ENCODE measurements at regions of chr2 and their contacts with region 1.

Region 1: GRCh38 chr2:190408538-190409271 is 550 bp downstream of the MFSD6 start:
- DNase-seq: peak; percentile 61
- H3K4me3 Mint-ChIP-seq: peak overlapping the region; percentile 86
- H3K27ac Mint-ChIP-seq: peak overlapping the region; percentile 91
- H3K4me1 Mint-ChIP-seq: peaks cover 36% of the 10 kb centered on the region
- H3K27me3 Mint-ChIP-seq: no peaks in the 10 kb centered on the region

Region 2: GRCh38 chr2:189613077-189613636 is 795.5 kb before region 1 on chr2:
- intact Hi-C with region 1: no loop called
- DNase-seq: no peak
- H3K4me3 Mint-ChIP-seq: no peak overlapping the region
- H3K27ac Mint-ChIP-seq: no peak overlapping the region
- H3K4me1 Mint-ChIP-seq: peaks cover 3% of the 10 kb centered on the region
- H3K27me3 Mint-ChIP-seq: peaks cover 5% of the 10 kb centered on the region

Region 3: GRCh38 chr2:189783927-189784867 is 624.5 kb before region 1 on chr2 and contains the starts of genes ORMDL1 and PMS1:
- intact Hi-C with region 1: loop called (anchors 10 kb)
- DNase-seq: peak; percentile 94
- H3K4me3 Mint-ChIP-seq: peak within 1 kb of the TSS; percentile 90
- H3K27ac Mint-ChIP-seq: peak within 1 kb of the TSS; percentile 90
- H3K4me1 Mint-ChIP-seq: peaks cover 45% of the 10 kb centered on the region
- H3K27me3 Mint-ChIP-seq: no peaks in the 10 kb centered on the region
- total RNA-seq, gene ORMDL1: 68.8 and 72.1 TPM in 2 replicates
- total RNA-seq, gene PMS1: 57.0 and 58.7 TPM in 2 replicates

Region 4: DNA sequence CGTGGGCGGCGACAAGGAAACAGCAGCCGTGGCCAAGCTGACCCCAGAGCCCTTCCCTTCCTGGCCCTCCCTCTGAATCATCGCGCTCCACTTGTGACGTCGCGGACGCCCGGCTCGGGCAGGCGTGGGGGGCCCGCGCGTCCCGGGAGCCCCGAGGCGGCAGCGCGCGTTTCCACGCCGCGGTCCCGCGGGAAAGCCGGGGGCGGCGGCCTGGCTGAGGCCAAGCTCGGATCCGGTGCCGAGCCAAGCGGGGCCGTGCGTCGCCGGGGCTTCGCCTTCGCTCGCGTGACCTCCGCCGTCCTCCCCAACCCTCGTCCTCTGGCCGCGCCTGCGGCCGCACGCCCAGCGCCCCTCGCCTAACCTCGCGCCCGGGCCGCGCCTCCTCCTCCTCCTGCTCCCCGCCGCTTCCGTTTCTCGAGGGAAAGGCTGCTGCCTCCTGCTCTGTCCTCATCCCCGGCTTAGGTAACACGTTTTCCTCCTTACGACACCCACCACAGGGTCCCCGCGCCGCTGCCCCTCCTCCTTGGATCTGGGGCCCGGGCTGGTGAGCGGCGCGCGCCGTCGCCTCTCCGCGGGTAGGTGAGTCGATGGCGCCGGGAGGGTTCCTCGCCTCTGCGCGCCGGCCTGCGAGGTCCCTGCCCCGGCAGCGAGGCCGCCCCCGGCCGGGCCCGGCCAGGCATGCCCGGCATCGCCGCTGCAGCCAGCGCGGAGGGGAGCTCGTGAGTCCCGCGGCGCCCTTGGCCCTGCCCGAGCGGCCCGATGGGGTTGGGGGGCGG is 65.0 kb before region 1 on chr2 and contains the start of gene INPP1:
- intact Hi-C with region 1: loop called (anchors 2 kb)
- DNase-seq: peak; percentile 30
- H3K4me3 Mint-ChIP-seq: peak within 1 kb of the TSS; percentile 88
- H3K27ac Mint-ChIP-seq: peak within 1 kb of the TSS; percentile 88
- H3K4me1 Mint-ChIP-seq: peaks cover 18% of the 10 kb centered on the region
- H3K27me3 Mint-ChIP-seq: peaks cover 6% of the 10 kb centered on the region
- total RNA-seq, gene INPP1: 12.8 and 13.6 TPM in 2 replicates

Region 5: GRCh38 chr2:190648289-190649034 is 239.8 kb after region 1 on chr2:
- intact Hi-C with region 1: loop called (anchors 2 kb)
- DNase-seq: peak; percentile 74
- H3K4me3 Mint-ChIP-seq: peak overlapping the region; percentile 73
- H3K27ac Mint-ChIP-seq: peak overlapping the region; percentile 74
- H3K4me1 Mint-ChIP-seq: peaks cover 40% of the 10 kb centered on the region
- H3K27me3 Mint-ChIP-seq: no peaks in the 10 kb centered on the region

Region 6: DNA sequence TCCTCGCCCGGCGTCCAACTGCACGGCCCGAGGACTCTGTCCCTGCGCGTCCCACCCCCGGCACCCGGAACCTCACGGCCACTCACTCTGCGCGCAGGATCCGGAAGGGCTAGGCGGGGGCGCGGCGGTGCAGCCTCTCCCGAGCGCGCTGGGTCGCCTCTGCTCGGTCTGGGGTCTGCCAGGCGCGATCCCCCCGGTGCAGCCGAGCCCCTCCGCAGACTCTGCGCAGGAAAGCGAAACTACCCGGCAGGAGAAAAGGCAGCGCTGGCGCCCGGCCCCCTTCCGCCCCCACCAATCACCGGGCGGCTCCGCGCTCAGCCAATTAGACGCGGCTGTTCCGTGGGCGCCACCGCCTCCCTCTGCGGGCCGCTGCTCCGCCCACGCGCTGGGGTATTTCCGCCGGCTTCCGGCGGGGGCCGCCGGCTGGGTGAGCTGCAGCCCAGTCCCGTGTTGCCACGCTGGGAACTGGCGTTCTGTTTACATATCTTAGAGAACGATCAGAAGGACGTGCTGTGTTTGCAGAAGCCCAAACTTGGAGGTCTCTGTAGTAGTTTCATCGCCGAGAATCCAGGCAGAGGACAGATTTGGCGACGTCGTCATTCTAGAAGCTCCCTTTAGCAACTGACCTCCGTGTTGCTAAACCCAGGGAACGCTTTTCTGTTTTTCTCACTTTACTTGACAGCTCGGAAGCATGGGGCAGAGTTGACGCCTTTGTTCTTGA is 605.4 kb after region 1 on chr2 and contains the start of gene STAT1:
- intact Hi-C with region 1: loop called (anchors 1 kb)
- DNase-seq: peak; percentile 96
- H3K4me3 Mint-ChIP-seq: no peak within 1 kb of the TSS
- H3K27ac Mint-ChIP-seq: no peak within 1 kb of the TSS
- H3K4me1 Mint-ChIP-seq: peaks cover 40% of the 10 kb centered on the region
- H3K27me3 Mint-ChIP-seq: no peaks in the 10 kb centered on the region
- total RNA-seq, gene STAT1: 135 and 139 TPM in 2 replicates

Measured in activated T-helper 2 cell treated with anti-CD3 and anti-CD28 coated beads, Interferon-gamma antibody, Interleukin-2, Interleukin-4, amounts not matched to agents 10 μg/mL and 5 μg/mL and 100 μg/mL, durations not matched to agents 14 hours and 24 hours and 36 hours (primary cell).